ENCODE measurements at regions of chr15 and their contacts with region 1.

Region 1: DNA sequence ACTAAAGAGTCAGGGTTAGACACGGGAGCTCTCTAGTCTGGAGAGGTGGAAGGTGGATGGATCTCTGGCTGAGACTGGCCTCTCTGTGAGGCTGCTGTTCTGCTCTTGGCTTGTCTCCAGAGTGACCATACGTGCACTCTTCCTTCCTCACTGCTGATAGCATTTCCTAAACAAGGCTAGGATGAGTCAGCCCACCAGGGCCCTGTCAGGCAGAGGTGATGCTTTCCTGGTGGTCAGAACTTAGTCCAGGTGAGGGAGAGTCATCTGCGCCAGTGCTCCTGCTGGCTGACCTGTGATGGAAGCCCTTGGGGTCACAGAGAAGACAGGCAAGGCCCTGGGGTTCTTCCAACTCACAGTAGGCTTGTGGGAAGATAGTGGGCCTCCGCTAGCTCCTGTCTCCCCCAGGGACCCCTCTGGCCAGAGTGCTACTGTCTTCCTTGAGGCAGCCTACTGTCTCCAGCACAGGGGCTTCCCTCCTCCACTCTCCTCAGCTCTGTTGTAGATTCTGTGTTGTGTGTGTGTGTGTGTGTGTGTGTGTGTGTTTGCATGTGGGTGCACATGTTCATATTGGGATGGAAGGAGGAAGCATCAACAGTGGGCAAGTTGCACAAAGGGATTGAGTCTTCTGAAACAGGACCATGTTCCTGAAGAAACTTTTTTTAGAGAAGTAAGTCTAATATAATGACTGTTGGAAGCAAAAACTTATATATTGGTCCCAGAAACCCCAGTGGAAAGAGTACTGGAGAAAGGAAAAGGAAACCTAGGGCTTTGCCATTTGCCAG is 16.5 kb downstream of the ALPK3 start:
- DNase-seq: peak; percentile 53
- H3K4me3 ChIP-seq: no peak overlapping the region
- H3K27ac ChIP-seq: no peak overlapping the region
- H3K4me1 ChIP-seq: peaks cover 13% of the 10 kb centered on the region
- H3K27me3 ChIP-seq: no peaks in the 10 kb centered on the region
- CTCF ChIP-seq: no peak
- POLR2A ChIP-seq: no peak

Region 2: GRCh38 chr15:84844964-84845363 is 11.3 kb after region 1 on chr15:
- CTCF ChIA-PET with region 1: interaction called, 10 read pairs
- POLR2A ChIA-PET with region 1: no interaction called
- dilution Hi-C with region 1: no loop called
- intact Hi-C with region 1: no loop called
- DNase-seq: no peak
- H3K4me3 ChIP-seq: no peak overlapping the region
- H3K27ac ChIP-seq: no peak overlapping the region
- H3K4me1 ChIP-seq: no peaks in the 10 kb centered on the region
- H3K27me3 ChIP-seq: no peaks in the 10 kb centered on the region
- CTCF ChIP-seq: no peak
- POLR2A ChIP-seq: no peak

Measured in endothelial cell of umbilical vein (primary cell).